ENCODE measurements at regions of chr1 and their contacts with region 1.

Region 1: DNA sequence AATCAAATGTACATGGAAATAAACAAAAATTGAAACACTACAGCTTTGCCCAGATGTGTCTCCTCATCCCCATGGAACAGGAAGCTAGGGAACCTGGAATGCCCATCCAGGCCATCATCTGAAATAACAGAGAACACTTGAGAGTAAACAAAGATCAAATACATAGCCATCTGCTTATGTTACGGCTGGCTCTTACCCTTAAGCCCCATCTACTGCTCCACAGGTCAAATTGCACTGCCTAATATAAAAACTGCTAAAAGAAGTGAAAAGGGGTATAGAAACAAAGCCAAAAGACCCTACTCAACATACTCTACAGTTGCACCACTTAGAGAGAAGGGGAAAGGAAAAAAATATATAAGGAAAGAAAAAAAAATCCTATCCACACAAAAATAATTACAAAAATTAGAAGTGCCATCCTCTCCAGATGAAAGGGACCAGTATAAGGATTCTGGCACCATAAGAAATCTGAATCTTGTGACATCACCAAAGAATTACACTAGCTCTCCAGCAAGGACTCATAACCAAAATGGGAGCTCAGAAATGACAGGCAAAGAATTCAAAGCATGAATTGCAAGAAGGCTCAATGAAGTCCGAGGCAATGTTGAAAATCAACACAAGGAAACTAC is 26.9 kb downstream of the OR6Y1 start:
- DNase-seq: no peak
- ATAC-seq: peak in 1 of 8 donors; percentile 16
- H3K4me3 ChIP-seq: no peak overlapping the region
- H3K27ac ChIP-seq: no peak overlapping the region
- H3K4me1 ChIP-seq: no peaks in the 10 kb centered on the region
- H3K27me3 ChIP-seq: no peaks in the 10 kb centered on the region
- CTCF ChIP-seq: peak in 7 of 9 donors; percentile 6 to 66 (median 46)

Region 2: DNA sequence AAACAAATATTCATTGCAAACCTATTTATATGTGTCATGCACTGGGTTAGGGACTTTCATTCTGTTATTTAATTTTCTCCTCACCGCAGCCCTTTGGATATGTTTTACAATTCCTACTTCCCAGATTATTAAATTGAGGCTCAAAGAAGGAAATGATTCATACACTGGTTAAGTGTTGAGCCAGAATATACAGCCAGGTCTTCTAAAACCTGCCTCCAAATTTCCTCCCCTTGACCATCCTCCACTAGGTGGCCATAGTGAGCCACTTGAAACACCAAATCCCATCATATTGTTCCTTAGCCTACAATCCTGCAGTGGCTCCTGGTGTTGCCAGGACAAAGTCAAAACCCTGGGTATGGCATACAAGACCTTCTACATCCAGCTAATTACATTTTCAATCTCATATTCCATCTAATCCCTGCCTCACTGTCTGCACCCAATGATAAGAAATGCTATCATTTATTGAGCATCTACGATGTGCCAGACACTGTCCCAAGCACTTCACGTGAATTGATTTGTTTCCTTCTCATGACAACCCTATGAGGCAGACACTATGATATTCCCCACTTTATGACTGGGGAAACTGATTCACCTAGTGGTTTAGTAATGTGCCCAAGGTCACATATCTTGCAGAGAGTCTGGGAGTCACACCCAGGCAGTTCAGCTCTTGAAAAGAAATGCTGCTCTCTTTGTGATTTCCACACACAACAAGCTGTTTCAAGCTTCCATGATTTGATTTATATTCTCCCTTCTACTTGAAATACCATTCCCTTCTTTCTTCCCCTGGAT is 557.4 kb before region 1 on chr1:
- intact Hi-C with region 1: loop called in 3 of 10 experiments (anchors 5 to 10 kb)
- DNase-seq: peak in 1 of 2 donors; percentile 66
- ATAC-seq: peak in 7 of 8 donors; percentile 62 to 78 (median 64)
- H3K4me3 ChIP-seq: no peak overlapping the region
- H3K27ac ChIP-seq: peak overlapping the region in 3 of 10 donors; percentile 2 to 46 (median 33)
- H3K4me1 ChIP-seq: peaks cover 0 to 23% (median 13%) of the 10 kb centered on the region in 9 donors
- H3K27me3 ChIP-seq: no peaks in the 10 kb centered on the region
- CTCF ChIP-seq: peak; percentile 57 to 84 (median 79)

Region 3: GRCh38 chr1:158434741-158435140 is 92.6 kb before region 1 on chr1:
- intact Hi-C with region 1: no loop called
- DNase-seq: no peak
- ATAC-seq: no peak
- H3K4me3 ChIP-seq: no peak overlapping the region
- H3K27ac ChIP-seq: no peak overlapping the region
- H3K4me1 ChIP-seq: peaks cover 0 to 21% (median 0%) of the 10 kb centered on the region in 9 donors
- H3K27me3 ChIP-seq: peaks cover 0 to 4% (median 0%) of the 10 kb centered on the region in 7 donors
- CTCF ChIP-seq: no peak

Measured in heart right ventricle (tissue), 16 donors.